ENCODE measurements at regions of chr1 and their contacts with region 1.

Region 1: DNA sequence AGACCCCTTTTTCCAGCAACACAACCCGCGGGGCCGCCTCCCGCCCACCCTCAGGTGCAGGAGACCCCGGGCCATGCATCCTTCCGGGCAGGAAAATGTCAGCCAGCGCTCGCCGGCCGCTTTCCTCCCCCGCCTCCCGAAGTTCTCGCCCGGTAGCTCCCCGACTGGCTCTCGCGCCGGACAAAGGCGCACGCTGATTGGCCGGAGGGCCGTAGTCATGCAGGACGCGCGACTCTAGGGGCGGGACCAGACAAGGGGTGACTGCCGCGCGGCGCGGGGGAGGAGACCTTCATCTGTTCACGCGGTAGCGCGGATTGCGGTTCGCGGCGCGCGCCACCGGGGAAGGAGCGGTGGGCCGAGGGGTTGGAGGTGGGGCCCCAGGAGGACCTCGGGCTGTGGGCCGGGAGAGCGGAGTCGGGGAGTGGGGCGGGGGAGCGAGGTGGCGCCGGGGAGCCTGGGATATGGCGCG is at the start of gene FLVCR1:
- DNase-seq: peak; percentile 98
- ATAC-seq: peak; percentile 98
- H3K4me3 Mint-ChIP-seq: no peak within 1 kb of the TSS
- H3K27ac Mint-ChIP-seq: peak within 1 kb of the TSS; percentile 92
- H3K4me1 Mint-ChIP-seq: peaks cover 15% of the 10 kb centered on the region
- H3K27me3 Mint-ChIP-seq: no peaks in the 10 kb centered on the region
- total RNA-seq, gene FLVCR1: 13.5 to 13.9 TPM

Region 2: GRCh38 chr1:212414328-212415106 is 443.5 kb before region 1 on chr1 and contains the start of gene PACC1:
- CTCF ChIA-PET with region 1: no interaction called
- POLR2A ChIA-PET with region 1: no interaction called
- intact Hi-C with region 1: loop called in 1 of 2 experiments (anchors 1 kb)
- DNase-seq: peak; percentile 93
- ATAC-seq: peak; percentile 98
- H3K4me3 Mint-ChIP-seq: peak within 1 kb of the TSS; percentile 93
- H3K27ac Mint-ChIP-seq: peak within 1 kb of the TSS; percentile 92
- H3K4me1 Mint-ChIP-seq: peaks cover 22% of the 10 kb centered on the region
- H3K27me3 Mint-ChIP-seq: no peaks in the 10 kb centered on the region
- total RNA-seq, gene PACC1: 9.2 to 13.8 TPM

Region 3: GRCh38 chr1:212558693-212559480 is 299.1 kb before region 1 on chr1:
- CTCF ChIA-PET with region 1: no interaction called
- POLR2A ChIA-PET with region 1: no interaction called
- intact Hi-C with region 1: loop called in 1 of 2 experiments (anchors 2 kb)
- DNase-seq: peak; percentile 95
- ATAC-seq: peak; percentile 90
- H3K4me3 Mint-ChIP-seq: peak overlapping the region; percentile 61
- H3K27ac Mint-ChIP-seq: peak overlapping the region; percentile 95
- H3K4me1 Mint-ChIP-seq: peaks cover 19% of the 10 kb centered on the region
- H3K27me3 Mint-ChIP-seq: peaks cover 14% of the 10 kb centered on the region

Region 4: GRCh38 chr1:212665241-212666115 is 192.5 kb before region 1 on chr1:
- CTCF ChIA-PET with region 1: interaction called, 4 read pairs
- POLR2A ChIA-PET with region 1: no interaction called
- intact Hi-C with region 1: loop called in 1 of 2 experiments (anchors 5 kb)
- DNase-seq: peak; percentile 91
- ATAC-seq: peak; percentile 98
- H3K4me3 Mint-ChIP-seq: peak overlapping the region; percentile 57
- H3K27ac Mint-ChIP-seq: peak overlapping the region; percentile 77
- H3K4me1 Mint-ChIP-seq: peaks cover 15% of the 10 kb centered on the region
- H3K27me3 Mint-ChIP-seq: peaks cover 3% of the 10 kb centered on the region

Region 5: GRCh38 chr1:212814537-212815334 is 43.3 kb before region 1 on chr1:
- CTCF ChIA-PET with region 1: no interaction called
- POLR2A ChIA-PET with region 1: no interaction called
- intact Hi-C with region 1: no loop called
- DNase-seq: peak; percentile 10
- ATAC-seq: no peak
- H3K4me3 Mint-ChIP-seq: no peak overlapping the region
- H3K27ac Mint-ChIP-seq: no peak overlapping the region
- H3K4me1 Mint-ChIP-seq: peaks cover 3% of the 10 kb centered on the region
- H3K27me3 Mint-ChIP-seq: no peaks in the 10 kb centered on the region

Region 6: DNA sequence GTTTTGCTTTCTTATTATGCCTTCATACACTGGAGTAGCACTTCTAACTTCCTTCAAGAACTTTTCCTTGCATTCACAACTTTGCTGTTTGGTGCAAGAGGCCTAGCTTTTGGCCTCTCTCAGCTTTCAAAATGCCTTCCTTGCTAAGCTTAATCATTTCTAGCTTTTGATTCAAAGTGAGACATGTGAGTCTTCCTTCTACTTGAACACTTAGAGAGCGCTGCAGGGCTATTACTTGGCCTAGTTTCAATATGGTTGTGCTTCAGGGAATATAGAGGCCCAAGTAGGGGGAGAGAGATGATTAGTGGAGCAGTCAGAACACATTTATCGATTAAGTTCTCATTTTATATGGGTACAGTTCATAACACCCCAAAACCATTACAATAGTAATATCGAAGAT is 145.2 kb after region 1 on chr1:
- CTCF ChIA-PET with region 1: no interaction called
- POLR2A ChIA-PET with region 1: no interaction called
- intact Hi-C with region 1: loop called in 1 of 2 experiments (anchors 5 kb)
- DNase-seq: peak; percentile 47
- ATAC-seq: peak; percentile 98
- H3K4me3 Mint-ChIP-seq: no peak overlapping the region
- H3K27ac Mint-ChIP-seq: peak overlapping the region; percentile 74
- H3K4me1 Mint-ChIP-seq: peaks cover 12% of the 10 kb centered on the region
- H3K27me3 Mint-ChIP-seq: no peaks in the 10 kb centered on the region

Region 7: DNA sequence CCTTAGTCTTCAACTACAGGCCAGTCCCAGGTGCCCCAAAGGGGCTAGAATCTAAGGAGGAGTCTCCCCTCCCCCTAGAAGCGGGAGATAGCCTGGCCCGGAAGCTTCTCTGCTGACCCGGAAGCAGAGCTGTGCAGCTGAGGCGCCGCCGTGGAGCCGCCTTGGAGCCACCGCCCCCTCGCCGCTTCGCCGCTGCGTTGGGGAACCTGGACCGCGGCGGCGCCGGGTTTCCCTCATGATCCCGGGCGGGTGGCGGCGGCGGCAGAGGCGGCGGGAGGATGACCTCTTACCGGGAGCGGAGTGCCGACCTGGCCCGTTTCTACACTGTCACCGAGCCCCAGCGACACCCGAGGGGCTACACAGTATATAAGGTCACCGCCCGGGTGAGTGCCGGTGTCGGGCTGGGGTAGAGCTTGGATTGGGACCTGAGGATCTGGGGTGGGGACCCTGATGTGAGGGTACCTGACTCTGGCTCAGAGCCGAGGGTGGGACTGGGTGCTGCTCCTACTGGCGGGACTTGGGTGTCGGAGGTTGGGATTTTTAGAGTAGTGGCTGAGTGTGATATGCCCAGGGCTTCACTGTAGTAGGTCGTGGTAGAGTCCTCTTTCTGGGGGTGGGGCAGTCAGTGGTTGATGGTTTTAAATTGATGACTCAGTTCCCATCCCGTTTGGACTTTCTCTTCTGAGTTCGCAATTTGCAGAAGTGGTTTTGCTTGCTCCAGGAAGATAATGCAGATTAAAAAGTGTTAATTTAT is 193.3 kb after region 1 on chr1 and contains the start of gene RPS6KC1:
- CTCF ChIA-PET with region 1: no interaction called
- POLR2A ChIA-PET with region 1: no interaction called
- intact Hi-C with region 1: loop called in 1 of 2 experiments (anchors 1 kb)
- DNase-seq: peak; percentile 92
- ATAC-seq: peak; percentile 97
- H3K4me3 Mint-ChIP-seq: peak within 1 kb of the TSS; percentile 82
- H3K27ac Mint-ChIP-seq: peak within 1 kb of the TSS; percentile 93
- H3K4me1 Mint-ChIP-seq: peaks cover 27% of the 10 kb centered on the region
- H3K27me3 Mint-ChIP-seq: peaks cover 9% of the 10 kb centered on the region
- total RNA-seq, gene RPS6KC1: 4.9 to 5.7 TPM

Region 8: DNA sequence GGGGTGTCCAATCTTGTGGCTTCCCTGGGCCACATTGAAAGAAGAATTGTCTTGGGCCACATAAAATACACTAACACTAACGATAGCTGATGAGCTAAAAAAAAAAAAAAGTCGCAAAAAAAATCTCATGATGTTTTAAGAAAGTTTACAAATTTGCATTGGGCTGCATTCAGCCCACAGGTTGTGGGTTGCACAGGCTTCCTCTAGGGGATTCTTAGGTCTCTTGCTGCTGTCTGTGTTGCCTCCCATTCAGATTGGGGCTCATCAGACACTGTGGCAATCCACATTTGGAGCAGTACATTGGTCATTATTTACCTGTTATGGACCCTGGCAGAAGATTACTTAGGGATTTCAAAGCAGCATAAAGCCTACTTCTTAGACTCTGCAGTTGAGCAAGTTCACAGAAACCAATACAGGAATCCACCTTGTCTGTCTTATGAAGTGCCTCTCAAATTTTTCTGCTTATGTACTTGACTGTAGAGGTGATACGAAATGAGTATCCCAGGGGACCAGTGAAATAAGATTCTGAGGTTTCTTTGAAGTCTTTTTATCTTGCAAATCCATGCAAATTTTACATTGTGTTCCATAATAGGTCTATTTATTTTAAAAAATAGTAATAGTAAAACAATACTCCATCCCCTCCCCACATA is 398.5 kb after region 1 on chr1:
- CTCF ChIA-PET with region 1: no interaction called
- POLR2A ChIA-PET with region 1: no interaction called
- intact Hi-C with region 1: no loop called
- DNase-seq: no peak
- ATAC-seq: no peak
- H3K4me3 Mint-ChIP-seq: no peak overlapping the region
- H3K27ac Mint-ChIP-seq: no peak overlapping the region
- H3K4me1 Mint-ChIP-seq: no peaks in the 10 kb centered on the region
- H3K27me3 Mint-ChIP-seq: no peaks in the 10 kb centered on the region